ENCODE measurements at regions of chr7 and their contacts with region 1.

Region 1: GRCh38 chr7:118153551-118154177 is 30.3 kb upstream of the LSM8 start:
- DNase-seq: peak; percentile 35
- ATAC-seq: peak; percentile 53
- H3K4me3 Mint-ChIP-seq: no peak overlapping the region
- H3K27ac Mint-ChIP-seq: no peak overlapping the region
- H3K4me1 Mint-ChIP-seq: no peaks in the 10 kb centered on the region
- H3K27me3 Mint-ChIP-seq: peaks cover 33% of the 10 kb centered on the region

Region 2: DNA sequence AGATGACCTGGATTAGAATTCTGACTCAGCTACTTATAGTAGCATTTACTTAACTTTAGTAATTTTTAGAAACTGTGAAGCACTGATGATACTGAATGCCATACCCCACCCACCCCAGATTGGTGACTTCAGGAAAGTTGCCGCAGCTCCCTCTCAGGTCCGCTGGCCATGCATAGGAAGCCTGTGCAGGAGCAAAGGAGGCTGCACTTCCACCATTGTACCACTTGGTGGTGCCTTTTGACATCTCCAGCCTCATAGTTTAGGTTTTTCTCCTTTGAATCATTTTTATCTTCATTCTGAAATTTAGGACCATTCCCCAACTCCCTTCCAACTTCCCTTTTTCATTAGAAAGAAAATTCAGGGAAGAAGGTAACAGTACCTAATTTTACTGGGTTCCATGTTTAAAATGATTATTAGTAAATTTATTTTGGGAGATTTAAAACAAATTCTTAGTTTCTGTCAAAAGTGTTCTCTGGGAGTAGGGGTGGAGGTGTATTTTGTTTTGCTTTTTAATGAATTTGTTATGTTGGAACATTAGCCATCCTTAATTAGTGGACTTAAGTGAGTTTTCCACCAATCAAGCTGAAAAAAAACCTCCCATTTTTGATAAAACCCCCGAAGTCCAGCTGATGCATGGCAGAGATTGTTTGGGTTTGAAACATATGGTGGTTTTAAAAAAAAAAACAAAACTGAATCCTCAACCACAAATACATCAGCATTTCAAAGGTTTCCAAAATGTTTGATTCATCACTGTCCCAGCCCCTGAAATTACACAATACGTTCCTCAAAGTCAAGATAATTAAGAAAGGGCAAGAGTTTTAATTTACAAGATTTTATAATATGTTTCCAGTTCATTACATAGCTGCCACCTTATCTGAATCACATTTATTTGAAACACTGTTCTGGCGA is 940.4 kb before region 1 on chr7:
- CTCF ChIA-PET with region 1: interaction called, 3 read pairs
- POLR2A ChIA-PET with region 1: no interaction called
- intact Hi-C with region 1: loop called (anchors 2 to 5 kb)
- DNase-seq: peak; percentile 68
- ATAC-seq: peak; percentile 64
- H3K4me3 Mint-ChIP-seq: no peak overlapping the region
- H3K27ac Mint-ChIP-seq: no peak overlapping the region
- H3K4me1 Mint-ChIP-seq: no peaks in the 10 kb centered on the region
- H3K27me3 Mint-ChIP-seq: no peaks in the 10 kb centered on the region

Region 3: GRCh38 chr7:117399820-117400422 is 753.7 kb before region 1 on chr7:
- CTCF ChIA-PET with region 1: no interaction called
- POLR2A ChIA-PET with region 1: no interaction called
- intact Hi-C with region 1: loop called in 1 of 2 experiments (anchors 2 kb)
- DNase-seq: no peak
- ATAC-seq: no peak
- H3K4me3 Mint-ChIP-seq: no peak overlapping the region
- H3K27ac Mint-ChIP-seq: no peak overlapping the region
- H3K4me1 Mint-ChIP-seq: no peaks in the 10 kb centered on the region
- H3K27me3 Mint-ChIP-seq: no peaks in the 10 kb centered on the region

Region 4: GRCh38 chr7:117458977-117459583 is 694.6 kb before region 1 on chr7:
- CTCF ChIA-PET with region 1: interaction called, 3 read pairs
- POLR2A ChIA-PET with region 1: no interaction called
- intact Hi-C with region 1: loop called in 1 of 2 experiments (anchors 1 kb)
- DNase-seq: no peak
- ATAC-seq: no peak
- H3K4me3 Mint-ChIP-seq: no peak overlapping the region
- H3K27ac Mint-ChIP-seq: no peak overlapping the region
- H3K4me1 Mint-ChIP-seq: no peaks in the 10 kb centered on the region
- H3K27me3 Mint-ChIP-seq: no peaks in the 10 kb centered on the region

Region 5: GRCh38 chr7:117750612-117751563 is 402.8 kb before region 1 on chr7:
- CTCF ChIA-PET with region 1: no interaction called
- POLR2A ChIA-PET with region 1: no interaction called
- intact Hi-C with region 1: loop called in 1 of 2 experiments (anchors 1 kb)
- DNase-seq: no peak
- ATAC-seq: no peak
- H3K4me3 Mint-ChIP-seq: no peak overlapping the region
- H3K27ac Mint-ChIP-seq: no peak overlapping the region
- H3K4me1 Mint-ChIP-seq: no peaks in the 10 kb centered on the region
- H3K27me3 Mint-ChIP-seq: peaks cover 1% of the 10 kb centered on the region

Region 6: GRCh38 chr7:118109607-118110006 is 44.1 kb before region 1 on chr7:
- CTCF ChIA-PET with region 1: no interaction called
- POLR2A ChIA-PET with region 1: no interaction called
- intact Hi-C with region 1: no loop called
- DNase-seq: no peak
- ATAC-seq: no peak
- H3K4me3 Mint-ChIP-seq: no peak overlapping the region
- H3K27ac Mint-ChIP-seq: no peak overlapping the region
- H3K4me1 Mint-ChIP-seq: no peaks in the 10 kb centered on the region
- H3K27me3 Mint-ChIP-seq: peaks cover 5% of the 10 kb centered on the region

Region 7: GRCh38 chr7:118129041-118129795 is 24.4 kb before region 1 on chr7:
- CTCF ChIA-PET with region 1: no interaction called
- POLR2A ChIA-PET with region 1: no interaction called
- intact Hi-C with region 1: no loop called
- DNase-seq: no peak
- ATAC-seq: no peak
- H3K4me3 Mint-ChIP-seq: no peak overlapping the region
- H3K27ac Mint-ChIP-seq: no peak overlapping the region
- H3K4me1 Mint-ChIP-seq: no peaks in the 10 kb centered on the region
- H3K27me3 Mint-ChIP-seq: no peaks in the 10 kb centered on the region

Region 8: DNA sequence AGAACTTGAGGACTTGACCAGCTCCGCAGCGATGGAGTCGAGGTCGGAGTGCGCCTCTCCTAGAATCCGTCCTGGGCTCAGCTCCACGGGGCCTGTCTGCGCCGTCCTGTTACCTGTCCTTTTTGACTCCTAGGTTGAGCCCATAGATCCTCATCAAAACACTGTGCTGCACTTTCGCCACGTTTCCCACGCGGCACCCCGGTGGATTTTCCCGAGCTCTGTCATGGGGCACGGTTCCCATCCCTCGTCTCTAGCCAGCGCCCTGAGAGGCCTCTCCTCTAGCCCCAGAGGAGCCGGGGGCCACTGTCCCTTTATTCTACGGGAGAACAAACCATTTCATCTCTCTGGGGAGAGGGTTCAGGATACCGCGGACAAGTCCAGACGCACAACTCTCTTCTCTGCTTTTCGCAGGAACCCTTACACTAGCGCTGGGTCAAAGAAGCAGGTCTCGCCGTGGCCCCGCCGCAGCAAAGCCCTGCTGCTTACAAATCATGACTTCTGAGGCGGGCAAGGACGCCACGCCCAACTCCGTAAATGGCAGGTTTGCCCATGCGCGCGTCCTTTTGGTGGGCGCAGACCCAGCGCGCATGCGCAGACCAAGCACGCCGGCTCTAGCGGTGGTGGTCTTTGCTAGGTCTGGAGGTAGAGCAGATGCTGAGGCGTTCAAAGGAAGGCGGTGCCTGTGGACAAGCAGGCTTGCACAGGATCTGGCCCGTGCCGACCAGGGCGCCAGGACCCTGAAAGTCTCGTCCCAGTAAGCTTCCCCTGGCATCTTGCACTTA is 60.6 kb after region 1 on chr7:
- CTCF ChIA-PET with region 1: no interaction called
- POLR2A ChIA-PET with region 1: no interaction called
- intact Hi-C with region 1: no loop called
- DNase-seq: peak; percentile 79
- ATAC-seq: peak; percentile 92
- H3K4me3 Mint-ChIP-seq: peak overlapping the region; percentile 78
- H3K27ac Mint-ChIP-seq: peak overlapping the region; percentile 68
- H3K4me1 Mint-ChIP-seq: peaks cover 12% of the 10 kb centered on the region
- H3K27me3 Mint-ChIP-seq: peaks cover 23% of the 10 kb centered on the region

Measured in activated CD4-positive, alpha-beta T cell treated with anti-CD3 and anti-CD28 coated beads for 36 hours (primary cell).